ENCODE measurements at regions of chr10 and their contacts with region 1.

Region 1: GRCh38 chr10:97869091-97870042 is 19.7 kb downstream of the GOLGA7B start:
- DNase-seq: peak; percentile 85
- H3K4me3 ChIP-seq: no peak overlapping the region
- H3K27ac ChIP-seq: no peak overlapping the region
- H3K4me1 ChIP-seq: peaks cover 11% of the 10 kb centered on the region
- CTCF ChIP-seq: peak; percentile 82

Region 2: DNA sequence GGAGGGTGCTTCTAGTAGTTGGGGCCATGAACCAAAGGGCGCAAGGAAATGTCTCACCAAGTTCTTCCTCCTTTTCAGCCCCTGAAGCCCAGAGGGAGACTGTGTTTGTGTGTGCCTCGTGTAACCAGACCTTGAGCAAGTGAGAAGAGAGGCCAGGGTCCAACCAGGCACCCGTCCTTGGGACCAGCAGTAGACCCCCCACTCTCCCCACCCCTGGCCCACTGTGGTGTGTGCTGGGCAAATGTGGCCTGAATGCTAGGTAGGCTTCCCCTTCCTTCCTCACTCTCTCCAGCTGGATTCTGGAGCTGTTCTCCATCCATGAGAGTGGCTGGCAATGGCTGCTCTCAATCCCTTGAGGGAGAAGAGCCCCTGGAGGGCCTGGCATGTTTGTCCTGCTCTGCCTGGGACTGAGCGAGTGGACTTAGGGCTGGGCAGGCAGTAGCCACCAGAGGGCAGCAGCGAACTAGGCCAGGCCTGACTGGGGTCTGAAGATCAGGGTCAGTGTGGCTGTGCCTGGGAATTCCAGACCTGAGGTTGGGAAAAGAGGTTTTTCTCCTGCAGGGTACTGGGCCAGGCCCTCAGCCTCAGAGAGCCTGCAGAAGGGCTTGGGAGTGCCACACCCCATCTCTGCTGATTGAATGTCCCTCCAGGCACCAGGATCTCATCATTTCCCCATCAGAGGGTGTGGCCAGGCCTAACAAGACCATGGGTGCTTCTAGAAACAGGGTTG is 110.0 kb before region 1 on chr10:
- CTCF ChIA-PET with region 1: no interaction called
- POLR2A ChIA-PET with region 1: interaction called, 3 read pairs
- intact Hi-C with region 1: loop called (anchors 1 kb)
- DNase-seq: peak; percentile 54
- H3K4me3 ChIP-seq: no peak overlapping the region
- H3K27ac ChIP-seq: no peak overlapping the region
- H3K4me1 ChIP-seq: peaks cover 16% of the 10 kb centered on the region
- CTCF ChIP-seq: peak; percentile 84

Region 3: GRCh38 chr10:97764519-97764931 is 104.8 kb before region 1 on chr10:
- CTCF ChIA-PET with region 1: no interaction called
- POLR2A ChIA-PET with region 1: no interaction called
- intact Hi-C with region 1: loop called (anchors 1 kb)
- DNase-seq: peak; percentile 81
- H3K4me3 ChIP-seq: no peak overlapping the region
- H3K27ac ChIP-seq: peak overlapping the region; percentile 48
- H3K4me1 ChIP-seq: peaks cover 34% of the 10 kb centered on the region
- CTCF ChIP-seq: no peak

Region 4: DNA sequence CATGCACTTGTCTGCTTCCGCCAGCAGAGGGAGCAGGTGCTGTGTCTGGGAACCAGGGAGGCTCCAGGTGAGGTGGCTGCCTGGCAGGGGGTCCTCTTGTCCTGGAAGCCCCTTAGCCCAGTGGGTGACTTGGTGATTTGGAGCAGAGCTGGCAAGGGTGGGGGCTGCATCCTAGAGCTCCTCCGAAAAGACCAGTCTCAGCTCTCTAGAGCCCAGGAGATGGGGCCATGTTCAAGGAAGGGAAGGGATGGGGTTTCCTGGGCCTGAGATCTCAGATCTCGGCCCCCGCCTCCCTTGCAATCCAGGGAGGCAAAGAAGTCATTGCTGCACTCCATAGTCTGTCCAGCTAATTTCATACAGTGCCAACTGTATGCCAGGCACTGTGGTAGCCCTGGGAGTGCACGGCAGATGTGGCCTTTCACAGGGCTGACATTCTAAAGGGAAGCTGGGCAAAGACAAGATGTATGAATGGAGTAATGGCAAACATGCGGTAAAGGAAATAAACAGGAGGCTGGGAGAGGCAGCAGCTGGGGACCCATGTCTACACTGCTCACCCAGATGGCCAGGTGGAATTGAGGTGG is 77.1 kb before region 1 on chr10:
- CTCF ChIA-PET with region 1: no interaction called
- POLR2A ChIA-PET with region 1: interaction called, 3 read pairs
- intact Hi-C with region 1: loop called (anchors 1 kb)
- DNase-seq: peak; percentile 65
- H3K4me3 ChIP-seq: no peak overlapping the region
- H3K27ac ChIP-seq: no peak overlapping the region
- H3K4me1 ChIP-seq: no peaks in the 10 kb centered on the region
- CTCF ChIP-seq: peak; percentile 89

Region 5: GRCh38 chr10:98045785-98046389 is 176.5 kb after region 1 on chr10:
- CTCF ChIA-PET with region 1: no interaction called
- POLR2A ChIA-PET with region 1: no interaction called
- intact Hi-C with region 1: no loop called
- DNase-seq: peak; percentile 86
- H3K4me3 ChIP-seq: no peak overlapping the region
- H3K27ac ChIP-seq: no peak overlapping the region
- H3K4me1 ChIP-seq: no peaks in the 10 kb centered on the region
- CTCF ChIP-seq: peak; percentile 94